ENCODE measurements at regions of chr1 and their contacts with region 1.

Region 1: GRCh38 chr1:198612471-198613260 is 26.2 kb upstream of the PTPRC start:
- DNase-seq: peak in 1 of 35 experiments; percentile 61
- ATAC-seq: peak; percentile 35 to 54 (median 40)
- H3K4me3 ChIP-seq: peak overlapping the region; percentile 11 to 38
- H3K4me3 Mint-ChIP-seq: peak overlapping the region; percentile 76 to 85 (median 77)
- H3K27ac ChIP-seq: peak overlapping the region; percentile 91
- H3K27ac Mint-ChIP-seq: peak overlapping the region; percentile 98 to 99
- H3K4me1 ChIP-seq: peaks cover 37 to 50% of the 10 kb centered on the region in 2 experiments
- H3K4me1 Mint-ChIP-seq: peaks cover 70 to 80% (median 79%) of the 10 kb centered on the region in 3 donors
- H3K27me3 ChIP-seq: no peaks in the 10 kb centered on the region
- H3K27me3 Mint-ChIP-seq: no peaks in the 10 kb centered on the region

Region 2: DNA sequence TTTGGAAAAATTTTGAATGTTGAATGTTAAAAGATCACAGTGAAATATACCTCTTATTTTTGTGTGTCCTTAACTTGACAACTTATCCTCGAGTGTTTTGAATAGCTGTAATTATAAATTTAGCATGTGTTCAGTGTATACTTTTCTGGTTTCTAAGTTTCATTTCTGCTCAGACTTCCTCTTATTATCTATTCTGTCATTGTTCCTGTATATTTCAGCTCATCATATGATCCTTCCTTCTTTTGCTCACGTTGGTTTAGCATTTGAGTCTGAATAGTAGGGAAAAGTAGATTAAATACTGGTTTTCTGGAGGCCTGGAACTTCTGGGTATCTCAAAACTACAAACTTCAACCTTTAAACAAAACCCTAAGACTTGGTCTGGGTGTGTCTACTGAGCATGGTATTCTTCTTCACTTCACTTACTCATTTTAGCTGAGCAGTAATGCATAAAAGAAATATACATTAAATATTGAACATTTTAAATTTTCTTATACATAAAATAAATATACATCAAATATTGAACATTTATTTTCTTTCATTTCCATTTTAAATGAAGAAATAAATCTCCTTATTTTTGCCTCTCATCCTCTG is 68.9 kb before region 1 on chr1:
- CTCF ChIA-PET with region 1: no interaction called
- POLR2A ChIA-PET with region 1: interaction called in 1 of 2 experiments, 17 read pairs
- DNase-seq: no peak
- ATAC-seq: no peak
- H3K4me3 ChIP-seq: no peak overlapping the region
- H3K4me3 Mint-ChIP-seq: peak overlapping the region in 1 of 3 donors; percentile 4
- H3K27ac ChIP-seq: peak overlapping the region; percentile 30
- H3K27ac Mint-ChIP-seq: peak overlapping the region; percentile 79 to 85
- H3K4me1 ChIP-seq: peaks cover 0 to 17% of the 10 kb centered on the region in 2 experiments
- H3K4me1 Mint-ChIP-seq: peaks cover 44 to 56% (median 53%) of the 10 kb centered on the region in 3 donors
- H3K27me3 ChIP-seq: no peaks in the 10 kb centered on the region
- H3K27me3 Mint-ChIP-seq: no peaks in the 10 kb centered on the region

Region 3: GRCh38 chr1:198575798-198576641 is 36.6 kb before region 1 on chr1:
- CTCF ChIA-PET with region 1: interaction called in 1 of 2 experiments, 11 read pairs
- POLR2A ChIA-PET with region 1: interaction called in 1 of 2 experiments, 3 read pairs
- DNase-seq: no peak
- ATAC-seq: no peak
- H3K4me3 ChIP-seq: no peak overlapping the region
- H3K4me3 Mint-ChIP-seq: no peak overlapping the region
- H3K27ac ChIP-seq: no peak overlapping the region
- H3K27ac Mint-ChIP-seq: peak overlapping the region; percentile 3 to 22
- H3K4me1 ChIP-seq: no peaks in the 10 kb centered on the region
- H3K4me1 Mint-ChIP-seq: peaks cover 13 to 18% (median 17%) of the 10 kb centered on the region in 3 donors
- H3K27me3 ChIP-seq: no peaks in the 10 kb centered on the region
- H3K27me3 Mint-ChIP-seq: no peaks in the 10 kb centered on the region

Region 4: DNA sequence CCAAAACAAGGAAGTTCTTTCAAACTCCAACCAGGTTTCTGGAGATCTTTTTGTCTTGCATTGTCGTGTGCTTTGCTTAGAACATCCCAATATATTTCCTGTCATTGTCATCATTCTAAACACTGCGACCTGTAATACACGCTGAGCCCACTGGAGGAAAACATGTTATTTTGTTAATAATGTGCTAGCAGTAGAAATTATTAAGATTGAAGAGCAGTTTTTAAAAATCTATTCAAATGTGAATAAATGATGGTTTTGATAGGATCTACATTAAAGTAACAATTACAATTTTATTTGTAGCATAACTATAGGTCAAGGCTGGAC is 294.7 kb after region 1 on chr1:
- CTCF ChIA-PET with region 1: no interaction called
- POLR2A ChIA-PET with region 1: no interaction called
- DNase-seq: peak in 1 of 35 experiments; percentile 29
- ATAC-seq: peak; percentile 45 to 75 (median 48)
- H3K4me3 ChIP-seq: no peak overlapping the region
- H3K4me3 Mint-ChIP-seq: peak overlapping the region in 1 of 3 donors; percentile 33
- H3K27ac ChIP-seq: no peak overlapping the region
- H3K27ac Mint-ChIP-seq: no peak overlapping the region
- H3K4me1 ChIP-seq: peaks cover 0 to 26% of the 10 kb centered on the region in 2 experiments
- H3K4me1 Mint-ChIP-seq: peaks cover 21 to 34% (median 23%) of the 10 kb centered on the region in 3 donors
- H3K27me3 ChIP-seq: no peaks in the 10 kb centered on the region
- H3K27me3 Mint-ChIP-seq: no peaks in the 10 kb centered on the region